ENCODE measurements at regions of chr9 and their contacts with region 1.

Region 1: GRCh38 chr9:132507746-132508469 is 74.5 kb upstream of the BARHL1 start:
- DNase-seq: peak; percentile 64
- H3K4me3 ChIP-seq: no peak overlapping the region
- H3K27ac ChIP-seq: no peak overlapping the region
- H3K4me1 ChIP-seq: no peaks in the 10 kb centered on the region
- H3K27me3 ChIP-seq: peaks cover 15 to 19% of the 10 kb centered on the region in 2 experiments
- CTCF ChIP-seq: peak; percentile 70 to 81
- POLR2A ChIP-seq: no peak

Region 2: GRCh38 chr9:132059361-132059760 is 448.5 kb before region 1 on chr9:
- CTCF ChIA-PET with region 1: no interaction called
- POLR2A ChIA-PET with region 1: no interaction called
- dilution Hi-C with region 1: no loop called
- intact Hi-C with region 1: no loop called
- DNase-seq: no peak
- H3K4me3 ChIP-seq: no peak overlapping the region
- H3K27ac ChIP-seq: no peak overlapping the region
- H3K4me1 ChIP-seq: no peaks in the 10 kb centered on the region
- H3K27me3 ChIP-seq: no peaks in the 10 kb centered on the region
- CTCF ChIP-seq: no peak
- POLR2A ChIP-seq: no peak

Region 3: DNA sequence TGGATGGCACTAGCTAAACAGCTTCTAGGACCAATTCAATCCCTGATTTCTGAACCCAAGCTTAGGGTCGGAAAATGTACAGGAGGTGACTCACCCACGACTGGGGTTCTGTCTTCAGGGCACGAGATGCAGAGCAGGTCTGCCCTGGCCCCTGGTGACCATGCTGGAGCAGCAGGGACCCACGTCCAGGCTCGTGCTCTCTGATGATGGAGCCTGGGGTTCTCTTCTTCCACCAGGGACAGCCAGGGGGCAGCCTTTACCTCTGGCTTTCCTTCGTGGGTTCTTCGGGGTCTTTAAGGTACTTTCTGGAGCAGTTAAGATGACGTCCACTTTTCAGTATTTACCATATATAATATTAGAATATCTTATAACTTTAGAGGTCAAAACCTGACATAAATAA is 95.8 kb before region 1 on chr9:
- CTCF ChIA-PET with region 1: interaction called, 8 read pairs
- POLR2A ChIA-PET with region 1: no interaction called
- dilution Hi-C with region 1: no loop called
- intact Hi-C with region 1: loop called (anchors 1 kb)
- DNase-seq: peak; percentile 14
- H3K4me3 ChIP-seq: no peak overlapping the region
- H3K27ac ChIP-seq: no peak overlapping the region
- H3K4me1 ChIP-seq: peaks cover 8% of the 10 kb centered on the region
- H3K27me3 ChIP-seq: peaks cover 29 to 46% of the 10 kb centered on the region in 2 experiments
- CTCF ChIP-seq: peak; percentile 55 to 61
- POLR2A ChIP-seq: no peak

Region 4: DNA sequence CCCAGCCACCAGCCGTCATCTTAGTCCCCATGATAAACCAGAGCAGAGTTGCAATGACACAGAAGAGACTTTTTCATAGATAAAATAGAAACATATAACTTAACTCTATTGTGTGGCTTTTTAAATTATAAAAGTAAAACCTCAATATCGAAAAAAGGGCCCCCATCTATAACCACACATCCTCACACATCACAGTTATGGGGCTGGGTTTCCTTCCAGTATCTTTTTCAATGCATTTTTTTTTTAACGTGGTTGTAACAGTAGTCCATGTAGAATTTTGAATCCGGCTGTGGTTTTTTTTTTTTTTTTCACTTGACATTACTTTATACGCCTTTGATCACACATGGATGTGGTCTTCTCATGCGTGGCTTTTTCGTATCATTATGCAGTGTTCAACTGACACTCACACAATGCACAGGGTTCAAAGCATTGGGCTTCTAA is 20.5 kb before region 1 on chr9:
- CTCF ChIA-PET with region 1: interaction called, 10 read pairs
- POLR2A ChIA-PET with region 1: no interaction called
- dilution Hi-C with region 1: no loop called
- intact Hi-C with region 1: no loop called
- DNase-seq: no peak
- H3K4me3 ChIP-seq: no peak overlapping the region
- H3K27ac ChIP-seq: no peak overlapping the region
- H3K4me1 ChIP-seq: no peaks in the 10 kb centered on the region
- H3K27me3 ChIP-seq: peaks cover 15 to 27% of the 10 kb centered on the region in 2 experiments
- CTCF ChIP-seq: no peak
- POLR2A ChIP-seq: no peak

Region 5: GRCh38 chr9:132546148-132547051 is 38.5 kb after region 1 on chr9:
- CTCF ChIA-PET with region 1: interaction called, 7 read pairs
- POLR2A ChIA-PET with region 1: no interaction called
- dilution Hi-C with region 1: no loop called
- intact Hi-C with region 1: loop called (anchors 2 kb)
- DNase-seq: peak; percentile 32
- H3K4me3 ChIP-seq: peak overlapping the region in 1 of 3 experiments; percentile 9
- H3K27ac ChIP-seq: no peak overlapping the region
- H3K4me1 ChIP-seq: peaks cover 14% of the 10 kb centered on the region
- H3K27me3 ChIP-seq: peaks cover 0 to 3% of the 10 kb centered on the region in 2 experiments
- CTCF ChIP-seq: peak; percentile 44 to 64
- POLR2A ChIP-seq: no peak

Region 6: DNA sequence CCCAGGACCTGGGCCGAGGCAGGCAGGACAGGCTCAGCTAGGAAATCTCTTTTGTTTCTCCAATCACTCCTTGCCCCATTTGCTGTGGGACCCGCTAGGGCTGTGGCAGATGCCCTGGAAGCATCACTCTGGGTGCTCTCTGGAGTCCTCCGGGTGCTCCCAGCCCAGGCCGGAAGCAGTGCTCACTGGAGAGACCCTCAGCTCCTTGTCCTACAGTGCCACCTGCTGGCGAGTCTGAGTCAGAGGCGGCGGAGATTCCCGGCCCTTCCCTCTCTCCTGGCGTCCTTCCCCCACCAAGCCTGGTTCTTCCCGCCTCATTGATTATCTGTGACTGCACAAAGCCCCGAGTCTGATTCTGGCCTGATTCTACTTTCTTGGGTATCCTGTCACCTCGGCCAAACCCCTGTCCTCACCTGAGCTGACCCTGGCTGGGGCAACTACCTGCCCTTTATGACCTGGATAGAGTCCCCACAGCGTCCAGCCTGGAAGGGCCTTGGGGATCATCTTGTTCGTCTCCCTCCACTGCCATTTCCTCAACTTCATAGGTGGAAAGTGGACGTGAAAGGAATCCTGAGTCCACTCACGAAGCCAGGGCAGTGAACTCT is 67.2 kb after region 1 on chr9:
- CTCF ChIA-PET with region 1: interaction called, 169 read pairs
- POLR2A ChIA-PET with region 1: no interaction called
- dilution Hi-C with region 1: no loop called
- intact Hi-C with region 1: loop called (anchors 1 kb)
- DNase-seq: peak; percentile 58
- H3K4me3 ChIP-seq: no peak overlapping the region
- H3K27ac ChIP-seq: no peak overlapping the region
- H3K4me1 ChIP-seq: no peaks in the 10 kb centered on the region
- H3K27me3 ChIP-seq: peaks cover 37 to 40% of the 10 kb centered on the region in 2 experiments
- CTCF ChIP-seq: peak; percentile 62 to 89
- POLR2A ChIP-seq: no peak

Measured in endothelial cell of umbilical vein (primary cell).